Natural killer cell (primary cell): ENCODE measurements at regions of chr10 and their contacts with region 1.

Region 1: GRCh38 chr10:101214446-101215396 is 14.5 kb downstream of the LBX1 start:
- DNase-seq: peak; percentile 64 to 88
- ATAC-seq: peak in 2 of 3 donors; percentile 73 to 78
- H3K4me3 ChIP-seq: no peak overlapping the region
- H3K4me3 Mint-ChIP-seq: peak overlapping the region; percentile 45
- H3K27ac ChIP-seq: no peak overlapping the region
- H3K27ac Mint-ChIP-seq: no peak overlapping the region
- H3K4me1 ChIP-seq: peaks cover 29% of the 10 kb centered on the region
- H3K4me1 Mint-ChIP-seq: peaks cover 17 to 20% of the 10 kb centered on the region in 2 donors
- H3K27me3 ChIP-seq: peaks cover 55% of the 10 kb centered on the region
- H3K27me3 Mint-ChIP-seq: peaks cover 62 to 66% of the 10 kb centered on the region in 2 donors
- CTCF ChIP-seq: peak; percentile 79

Region 2: DNA sequence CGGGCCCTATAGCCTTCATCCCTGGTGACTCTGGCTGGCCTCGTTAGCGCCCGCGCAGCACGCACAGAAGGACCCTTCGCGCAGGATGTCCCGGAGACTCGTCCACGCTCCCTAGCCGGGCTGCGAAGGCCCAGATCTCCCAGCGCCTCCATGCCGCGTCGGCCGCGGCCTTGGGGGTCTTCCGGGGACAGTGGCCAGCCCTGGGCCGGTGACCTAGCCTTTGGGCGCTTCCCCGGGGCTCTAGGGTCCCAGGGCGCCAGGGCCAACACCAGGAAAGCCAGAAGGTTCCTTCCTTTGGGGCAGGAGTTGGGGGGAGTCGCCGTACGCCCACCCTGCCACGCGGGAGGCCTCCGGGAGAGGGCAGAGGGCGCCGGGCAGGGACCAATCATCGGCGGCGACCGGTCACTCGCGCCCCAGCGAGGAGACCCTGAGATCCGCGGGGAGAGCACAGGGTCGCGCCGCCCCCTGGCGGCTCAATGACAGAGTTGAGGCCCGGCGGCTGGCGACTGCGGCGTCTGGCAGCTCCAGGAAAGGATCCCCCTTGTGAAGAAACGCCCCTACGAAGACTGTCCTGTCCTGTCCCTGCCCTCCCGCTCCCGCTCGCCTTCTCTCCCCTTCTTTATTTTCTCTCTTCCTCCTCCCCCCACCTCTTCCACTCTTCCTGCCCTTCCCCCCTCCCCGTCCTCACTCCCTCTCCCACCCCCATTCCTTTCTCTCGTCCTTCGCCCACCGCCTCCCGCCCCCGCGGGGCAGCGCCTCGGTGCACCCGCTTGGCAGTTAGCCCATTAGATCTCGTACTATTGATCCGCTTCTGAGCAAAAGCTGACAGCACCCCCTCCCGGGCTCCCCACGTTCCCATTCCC is 76.8 kb after region 1 on chr10:
- intact Hi-C with region 1: loop called (anchors 5 kb)
- DNase-seq: peak; percentile 19 to 66
- ATAC-seq: peak; percentile 58 to 81 (median 76)
- H3K4me3 ChIP-seq: no peak overlapping the region
- H3K4me3 Mint-ChIP-seq: peak overlapping the region; percentile 94
- H3K27ac ChIP-seq: no peak overlapping the region
- H3K27ac Mint-ChIP-seq: no peak overlapping the region
- H3K4me1 ChIP-seq: peaks cover 17% of the 10 kb centered on the region
- H3K4me1 Mint-ChIP-seq: peaks cover 0 to 21% of the 10 kb centered on the region in 2 donors
- H3K27me3 ChIP-seq: peaks cover 39% of the 10 kb centered on the region
- H3K27me3 Mint-ChIP-seq: peaks cover 66 to 69% of the 10 kb centered on the region in 2 donors
- CTCF ChIP-seq: peak; percentile 64

Region 3: DNA sequence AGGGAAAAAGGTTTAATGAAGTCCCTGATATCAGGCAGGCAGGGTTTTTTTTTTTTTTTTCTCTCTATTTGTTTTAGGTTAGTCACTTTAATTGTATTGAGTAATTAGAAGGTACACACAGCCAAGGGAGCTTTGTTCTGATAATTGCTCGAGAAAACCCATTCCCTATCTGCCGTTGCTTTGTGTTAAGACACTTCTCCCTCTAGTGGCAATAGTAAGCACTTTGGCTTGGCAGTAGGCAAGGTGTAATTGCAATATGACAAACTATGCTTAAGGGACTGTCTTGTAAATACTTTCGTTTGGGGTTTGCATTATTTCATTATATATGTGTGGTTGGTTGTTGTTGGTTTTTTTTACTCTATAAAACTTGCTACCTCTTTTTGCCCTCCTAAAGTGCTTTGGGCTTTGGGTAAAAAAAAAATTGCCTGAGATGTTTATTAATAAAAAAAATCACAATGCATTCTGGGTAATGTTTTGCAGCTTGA is 252.6 kb after region 1 on chr10:
- intact Hi-C with region 1: loop called (anchors 2 kb)
- DNase-seq: peak in 1 of 2 donors; percentile 73
- ATAC-seq: peak; percentile 83 to 95 (median 86)
- H3K4me3 ChIP-seq: no peak overlapping the region
- H3K4me3 Mint-ChIP-seq: no peak overlapping the region
- H3K27ac ChIP-seq: no peak overlapping the region
- H3K27ac Mint-ChIP-seq: no peak overlapping the region
- H3K4me1 ChIP-seq: no peaks in the 10 kb centered on the region
- H3K4me1 Mint-ChIP-seq: peaks cover 6 to 7% of the 10 kb centered on the region in 2 donors
- H3K27me3 ChIP-seq: no peaks in the 10 kb centered on the region
- H3K27me3 Mint-ChIP-seq: no peaks in the 10 kb centered on the region
- CTCF ChIP-seq: peak; percentile 74

Region 4: GRCh38 chr10:101569838-101570766 is 355.4 kb after region 1 on chr10:
- intact Hi-C with region 1: loop called (anchors 1 kb)
- DNase-seq: peak; percentile 86 to 88
- ATAC-seq: peak; percentile 90 to 98 (median 94)
- H3K4me3 ChIP-seq: peak overlapping the region; percentile 62
- H3K4me3 Mint-ChIP-seq: peak overlapping the region; percentile 55
- H3K27ac ChIP-seq: no peak overlapping the region
- H3K27ac Mint-ChIP-seq: no peak overlapping the region
- H3K4me1 ChIP-seq: peaks cover 18% of the 10 kb centered on the region
- H3K4me1 Mint-ChIP-seq: peaks cover 6 to 15% of the 10 kb centered on the region in 2 donors
- H3K27me3 ChIP-seq: peaks cover 32% of the 10 kb centered on the region
- H3K27me3 Mint-ChIP-seq: peaks cover 34 to 38% of the 10 kb centered on the region in 2 donors
- CTCF ChIP-seq: peak; percentile 85

Region 5: GRCh38 chr10:101782811-101783735 is 568.4 kb after region 1 on chr10 and contains the start of gene NPM3:
- intact Hi-C with region 1: loop called (anchors 2 kb)
- DNase-seq: peak; percentile 75 to 86
- ATAC-seq: peak; percentile 78 to 83 (median 82)
- H3K4me3 ChIP-seq: peak within 1 kb of the TSS; percentile 77
- H3K4me3 Mint-ChIP-seq: peak within 1 kb of the TSS; percentile 100
- H3K27ac ChIP-seq: peak within 1 kb of the TSS; percentile 70
- H3K27ac Mint-ChIP-seq: peak within 1 kb of the TSS; percentile 93 to 96
- H3K4me1 ChIP-seq: peaks cover 55% of the 10 kb centered on the region
- H3K4me1 Mint-ChIP-seq: peaks cover 55 to 58% of the 10 kb centered on the region in 2 donors
- H3K27me3 ChIP-seq: peaks cover 9% of the 10 kb centered on the region
- H3K27me3 Mint-ChIP-seq: peaks cover 7 to 11% of the 10 kb centered on the region in 2 donors
- CTCF ChIP-seq: no peak
- total RNA-seq, gene NPM3: 8.2 to 9.0 (median 8.5) TPM